ENCODE measurements at regions of chr6 and their contacts with region 1.

Region 1: DNA sequence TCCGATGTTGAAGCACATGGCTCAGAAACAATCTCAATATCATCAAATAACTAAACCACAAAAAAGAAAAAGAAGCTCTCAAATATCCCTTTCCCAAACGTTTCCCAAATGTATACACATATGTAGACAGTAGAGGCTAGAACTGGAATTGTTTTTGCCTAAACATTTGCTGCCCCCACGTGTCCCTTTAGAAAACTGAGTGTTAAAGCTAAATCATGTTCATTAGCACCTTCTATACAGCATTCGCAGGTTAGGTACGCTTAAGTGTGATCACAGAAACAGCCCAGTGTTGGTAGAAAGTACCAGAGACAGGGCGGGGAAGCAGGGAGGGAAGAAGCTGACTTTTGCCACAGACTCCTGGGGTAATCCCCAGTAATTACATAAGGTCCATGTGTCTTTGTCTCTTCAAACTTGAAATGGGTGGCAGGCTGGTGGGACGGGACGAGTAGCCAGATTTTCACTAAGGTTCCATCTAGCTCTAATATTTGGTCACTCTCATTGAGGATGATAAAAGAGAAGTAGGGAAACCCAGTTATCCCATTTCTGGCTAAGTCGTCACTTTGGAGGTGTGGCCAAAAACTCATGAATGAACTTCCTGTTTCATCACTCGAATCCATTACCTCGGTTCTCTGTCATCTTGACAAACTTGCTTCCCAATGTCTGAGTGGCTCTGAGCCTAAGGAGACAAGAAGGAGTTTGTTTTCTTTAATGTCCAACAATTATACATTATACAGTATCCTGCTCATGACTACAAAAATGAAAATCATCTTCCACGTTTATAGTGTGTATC is 15.0 kb upstream of the TFAP2A start:
- DNase-seq: peak; percentile 74
- H3K4me3 ChIP-seq: no peak overlapping the region
- H3K27ac ChIP-seq: peak overlapping the region; percentile 98
- H3K4me1 ChIP-seq: peaks cover 80% of the 10 kb centered on the region
- H3K27me3 ChIP-seq: no peaks in the 10 kb centered on the region
- CTCF ChIP-seq: peak; percentile 49 to 69

Region 2: GRCh38 chr6:8627085-8627861 is 1802.6 kb before region 1 on chr6:
- CTCF ChIA-PET with region 1: no interaction called
- dilution Hi-C with region 1: no loop called
- in situ Hi-C with region 1: no loop called
- intact Hi-C with region 1: loop called (anchors 2 kb)
- DNase-seq: peak; percentile 97
- H3K4me3 ChIP-seq: peak overlapping the region in 1 of 3 experiments; percentile 28
- H3K27ac ChIP-seq: peak overlapping the region; percentile 94
- H3K4me1 ChIP-seq: peaks cover 22% of the 10 kb centered on the region
- H3K27me3 ChIP-seq: no peaks in the 10 kb centered on the region
- CTCF ChIP-seq: no peak

Region 3: DNA sequence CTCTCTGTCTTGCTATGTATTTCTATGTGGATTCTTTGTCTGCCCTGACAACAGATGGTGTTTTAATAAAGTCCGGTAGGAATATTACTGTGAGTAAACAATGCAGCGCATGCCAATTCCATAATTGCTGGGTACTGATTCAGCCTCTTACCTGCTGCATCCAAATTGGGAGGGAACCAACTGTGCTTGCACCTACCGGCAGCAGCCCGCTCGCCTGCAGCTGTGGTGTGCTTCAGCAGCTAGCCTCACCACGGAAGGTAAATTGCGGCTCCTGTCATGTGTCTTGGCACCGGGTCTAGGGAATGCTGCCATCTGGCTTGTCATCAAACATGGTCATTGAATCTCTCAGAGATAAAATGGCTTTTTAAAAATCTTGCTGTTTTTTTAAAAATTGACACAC is 1289.7 kb before region 1 on chr6:
- CTCF ChIA-PET with region 1: no interaction called
- dilution Hi-C with region 1: no loop called
- in situ Hi-C with region 1: loop called in 1 of 2 experiments (anchors 25 kb)
- intact Hi-C with region 1: no loop called
- DNase-seq: peak; percentile 22
- H3K4me3 ChIP-seq: no peak overlapping the region
- H3K27ac ChIP-seq: no peak overlapping the region
- H3K4me1 ChIP-seq: peaks cover 12% of the 10 kb centered on the region
- H3K27me3 ChIP-seq: no peaks in the 10 kb centered on the region
- CTCF ChIP-seq: peak in 1 of 2 donors; percentile 5

Region 4: DNA sequence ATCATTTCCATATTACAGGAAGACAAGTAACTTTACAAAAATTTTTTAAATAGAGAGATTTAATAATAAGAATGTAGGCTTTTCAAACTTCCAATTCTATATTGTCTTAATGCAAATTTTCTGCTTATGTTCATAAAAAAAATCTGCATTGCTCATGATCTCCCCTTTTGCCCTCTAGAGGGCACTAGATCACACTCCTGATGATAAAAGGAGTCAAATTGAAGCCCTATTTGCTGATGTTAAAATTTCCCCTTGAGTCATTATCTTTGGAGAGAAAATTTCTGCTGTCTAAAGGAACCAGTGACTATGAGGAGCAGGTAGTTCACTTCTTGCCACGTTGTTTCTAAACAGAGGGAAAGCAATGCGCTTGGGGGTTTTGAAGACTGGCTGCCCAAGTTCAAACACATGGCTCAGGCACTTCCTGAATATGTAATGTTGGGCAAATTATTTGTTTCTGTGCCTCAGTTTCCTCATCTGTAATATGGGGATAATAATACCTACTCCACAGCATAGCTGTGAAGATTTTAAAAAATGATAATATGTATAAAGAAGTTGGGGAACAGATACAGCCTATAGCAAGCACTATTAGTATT is 889.2 kb before region 1 on chr6:
- CTCF ChIA-PET with region 1: no interaction called
- dilution Hi-C with region 1: no loop called
- in situ Hi-C with region 1: no loop called
- intact Hi-C with region 1: loop called (anchors 2 kb)
- DNase-seq: peak; percentile 72
- H3K4me3 ChIP-seq: no peak overlapping the region
- H3K27ac ChIP-seq: no peak overlapping the region
- H3K4me1 ChIP-seq: no peaks in the 10 kb centered on the region
- H3K27me3 ChIP-seq: no peaks in the 10 kb centered on the region
- CTCF ChIP-seq: peak; percentile 74 to 80

Region 5: DNA sequence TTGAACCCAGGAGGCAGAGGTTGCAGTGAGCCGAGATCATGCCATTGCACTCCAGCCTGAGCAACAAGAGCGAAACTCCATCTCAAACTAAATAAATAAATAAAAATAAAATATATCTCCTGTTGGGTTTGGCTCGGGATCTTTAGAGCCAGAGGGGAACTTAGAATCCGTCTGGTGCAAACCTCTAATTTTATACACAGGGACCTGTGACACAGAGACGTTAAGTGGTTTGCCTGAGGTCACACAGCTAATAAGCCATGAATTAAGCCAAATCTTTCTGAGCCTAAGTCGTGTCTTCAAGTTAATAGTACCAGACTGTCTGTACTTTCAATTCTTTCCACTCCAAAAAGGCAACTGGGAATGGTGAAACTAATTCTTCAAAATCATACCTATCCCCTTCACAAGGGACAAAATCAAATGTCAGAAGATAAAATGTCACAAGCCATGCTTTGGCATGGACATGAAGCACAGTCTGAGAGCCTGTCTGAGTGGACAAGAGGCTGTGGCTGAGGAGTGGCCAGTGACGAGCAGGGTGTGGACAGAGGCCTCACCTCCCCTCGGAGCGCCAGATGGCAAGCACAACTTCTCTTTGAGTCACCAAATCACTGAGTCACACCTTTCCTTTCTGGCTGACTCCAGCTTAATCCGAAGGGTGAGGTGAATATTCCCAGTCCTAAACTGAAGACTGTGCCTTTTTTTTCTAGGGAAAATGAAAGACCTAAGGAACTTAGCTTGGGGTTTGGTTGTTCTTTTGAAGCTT is 192.4 kb before region 1 on chr6:
- CTCF ChIA-PET with region 1: interaction called, 41 read pairs
- dilution Hi-C with region 1: no loop called
- in situ Hi-C with region 1: no loop called
- intact Hi-C with region 1: no loop called
- DNase-seq: peak; percentile 96
- H3K4me3 ChIP-seq: no peak overlapping the region
- H3K27ac ChIP-seq: peak overlapping the region; percentile 77
- H3K4me1 ChIP-seq: peaks cover 8% of the 10 kb centered on the region
- H3K27me3 ChIP-seq: no peaks in the 10 kb centered on the region
- CTCF ChIP-seq: no peak

Region 6: DNA sequence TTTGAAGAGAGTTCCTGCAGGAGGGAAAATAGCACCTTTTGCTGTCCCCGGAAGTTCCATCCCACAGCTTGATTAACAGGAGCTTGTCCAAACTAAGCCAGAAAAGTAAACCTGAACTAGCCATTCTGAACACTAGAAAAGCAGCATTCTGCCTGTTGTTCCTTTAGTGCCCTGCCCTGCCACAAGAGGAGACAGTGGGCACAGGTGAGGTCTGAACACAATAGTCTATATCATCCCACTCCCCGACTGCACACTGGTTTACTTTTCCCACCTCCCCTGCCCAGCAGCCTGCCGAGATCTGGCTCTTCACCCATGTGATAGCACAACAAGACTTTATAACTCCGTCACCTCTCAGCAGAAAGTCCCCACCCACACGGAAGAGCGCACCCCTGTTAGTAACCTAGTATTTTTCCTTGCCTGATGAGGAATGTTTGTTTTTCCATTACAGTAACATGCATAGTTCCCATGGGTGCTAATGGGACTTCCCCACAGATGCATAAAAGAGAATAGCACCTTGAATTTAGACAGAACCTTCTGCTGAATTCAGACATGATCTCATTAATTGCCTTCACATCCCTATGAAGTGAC is 74.6 kb before region 1 on chr6:
- CTCF ChIA-PET with region 1: no interaction called
- dilution Hi-C with region 1: no loop called
- in situ Hi-C with region 1: no loop called
- intact Hi-C with region 1: no loop called
- DNase-seq: peak; percentile 93
- H3K4me3 ChIP-seq: no peak overlapping the region
- H3K27ac ChIP-seq: peak overlapping the region; percentile 87
- H3K4me1 ChIP-seq: peaks cover 12% of the 10 kb centered on the region
- H3K27me3 ChIP-seq: no peaks in the 10 kb centered on the region
- CTCF ChIP-seq: peak in 1 of 2 donors; percentile 3

Region 7: GRCh38 chr6:10451828-10452509 is 22.1 kb after region 1 on chr6:
- CTCF ChIA-PET with region 1: no interaction called
- dilution Hi-C with region 1: no loop called
- in situ Hi-C with region 1: no loop called
- intact Hi-C with region 1: loop called (anchors 1 kb)
- DNase-seq: peak; percentile 98
- H3K4me3 ChIP-seq: no peak overlapping the region
- H3K27ac ChIP-seq: peak overlapping the region; percentile 87
- H3K4me1 ChIP-seq: peaks cover 31% of the 10 kb centered on the region
- H3K27me3 ChIP-seq: no peaks in the 10 kb centered on the region
- CTCF ChIP-seq: no peak

Region 8: DNA sequence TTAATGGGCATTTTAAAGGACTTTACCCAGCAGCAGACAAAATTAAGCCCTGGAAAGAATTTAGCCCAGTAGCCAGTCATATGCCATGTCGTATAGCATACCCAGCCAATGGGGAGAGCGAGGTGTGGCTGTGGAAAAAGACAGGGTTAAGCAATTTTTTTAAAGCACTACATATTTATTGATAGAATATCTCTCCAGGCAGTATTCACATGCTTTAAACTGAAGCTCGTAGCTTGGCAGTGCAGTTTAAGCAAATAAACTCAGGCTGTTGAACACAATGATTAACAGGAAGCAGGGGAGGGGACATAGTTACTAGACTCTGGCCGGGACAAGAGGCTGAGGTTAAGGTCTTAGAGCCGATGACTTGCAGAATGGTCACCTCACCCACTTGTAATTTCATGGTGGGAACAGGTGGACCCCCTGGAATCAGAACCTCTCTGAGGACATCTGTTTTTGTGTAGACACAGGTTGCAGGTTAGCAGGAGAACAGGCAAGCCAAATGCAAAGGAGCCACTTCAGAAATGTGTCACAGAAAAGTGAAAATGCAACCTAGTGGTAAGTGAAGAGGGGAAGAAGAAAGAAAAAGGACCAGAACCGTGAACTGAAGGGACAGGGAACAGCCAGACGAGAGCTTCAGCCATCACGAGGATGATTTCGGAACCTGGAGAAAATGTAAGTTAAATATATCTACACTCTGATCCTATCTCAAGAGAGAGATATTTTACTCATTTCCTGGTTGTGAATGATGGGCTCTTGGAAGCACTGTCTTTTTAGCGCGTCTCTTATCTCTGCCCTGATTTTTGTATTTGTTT is 98.5 kb after region 1 on chr6:
- CTCF ChIA-PET with region 1: no interaction called
- dilution Hi-C with region 1: no loop called
- in situ Hi-C with region 1: no loop called
- intact Hi-C with region 1: no loop called
- DNase-seq: no peak
- H3K4me3 ChIP-seq: no peak overlapping the region
- H3K27ac ChIP-seq: no peak overlapping the region
- H3K4me1 ChIP-seq: no peaks in the 10 kb centered on the region
- H3K27me3 ChIP-seq: no peaks in the 10 kb centered on the region
- CTCF ChIP-seq: no peak